HEK293 (cell line): ENCODE measurements at regions of chr6 and their contacts with region 1.

Region 1: GRCh38 chr6:56955171-56956045 is 501 bp downstream of the BEND6 start:
- H3K4me3 ChIP-seq: peak overlapping the region; percentile 62
- H3K27ac ChIP-seq: peak overlapping the region; percentile 70; the same call in 1 of the 2 replicates
- H3K4me1 ChIP-seq: peaks cover 6% of the 10 kb centered on the region
- CTCF ChIP-seq: peak; percentile 94

Region 2: DNA sequence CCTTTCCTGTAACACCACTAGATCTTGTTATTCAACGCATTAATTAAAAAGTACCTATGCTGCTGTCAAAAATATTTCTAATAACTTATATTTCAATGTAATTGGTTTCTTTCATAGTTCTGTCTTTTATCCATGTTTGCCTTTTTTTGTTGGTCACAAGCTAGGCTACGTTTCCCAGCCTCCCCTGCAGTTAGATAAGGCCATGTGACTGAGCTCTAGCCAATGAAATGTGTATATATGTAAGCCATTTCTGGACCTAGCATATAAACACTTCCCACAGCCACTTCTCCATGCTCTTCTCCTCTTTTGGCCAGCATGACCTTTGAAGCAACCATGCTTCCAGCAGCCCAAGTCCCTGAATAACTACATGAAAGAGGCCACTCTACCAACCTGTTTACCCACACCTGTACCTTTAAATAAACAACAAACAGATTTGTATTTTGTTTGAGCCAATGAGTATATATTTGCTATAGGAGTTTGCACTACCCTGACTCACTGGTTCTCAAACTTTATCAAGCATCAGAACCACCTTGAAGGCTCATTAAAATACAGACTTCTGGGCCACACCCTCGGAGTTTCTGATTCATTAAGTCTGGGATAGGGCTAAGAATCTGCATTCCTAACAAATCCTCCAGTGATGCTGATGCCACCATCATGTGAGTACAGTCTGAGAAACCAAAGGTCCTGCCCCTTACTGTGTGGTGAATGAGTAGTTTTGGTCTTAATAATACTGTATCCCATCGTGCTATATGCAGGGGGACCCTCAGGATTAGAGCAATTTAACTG is 46.1 kb before region 1 on chr6:
- CTCF ChIA-PET with region 1: interaction called, 92 read pairs
- POLR2A ChIA-PET with region 1: interaction called, 15 read pairs
- H3K4me3 ChIP-seq: no peak overlapping the region
- H3K27ac ChIP-seq: no peak overlapping the region
- H3K4me1 ChIP-seq: no peaks in the 10 kb centered on the region; the same call in 1 of the 2 replicates
- CTCF ChIP-seq: no peak

Region 3: DNA sequence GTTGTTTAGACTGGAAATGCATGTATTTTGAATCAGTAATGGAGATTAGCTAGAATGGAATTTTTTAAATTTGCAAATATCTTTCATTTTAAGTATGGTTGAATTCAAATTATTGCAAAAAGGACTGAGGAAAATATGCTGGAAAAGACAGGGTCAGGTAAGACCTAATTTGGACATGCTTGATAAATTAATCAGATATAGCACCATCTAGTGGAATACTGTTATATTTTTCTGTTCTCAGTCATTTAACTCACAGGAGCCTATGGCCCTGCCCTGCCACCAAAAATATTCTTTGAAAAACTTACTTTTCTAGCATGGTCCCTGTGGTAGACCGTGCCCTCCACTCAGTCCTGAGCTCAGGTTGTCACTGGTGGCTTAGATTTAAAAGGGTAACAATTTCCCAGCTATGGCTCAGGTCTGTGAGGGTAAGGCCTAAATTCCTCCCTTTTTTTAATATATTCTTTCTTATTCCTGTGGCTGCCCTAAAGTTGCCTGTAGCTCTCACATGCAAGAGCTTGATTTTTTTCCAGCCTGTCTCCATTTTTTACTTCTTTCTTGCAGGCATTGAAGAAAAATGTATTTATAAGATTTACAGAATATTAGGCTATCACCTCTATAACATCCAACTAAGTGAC is 65.8 kb after region 1 on chr6:
- CTCF ChIA-PET with region 1: interaction called, 32 read pairs
- POLR2A ChIA-PET with region 1: interaction called, 3 read pairs
- H3K4me3 ChIP-seq: no peak overlapping the region
- H3K27ac ChIP-seq: no peak overlapping the region
- H3K4me1 ChIP-seq: no peaks in the 10 kb centered on the region
- CTCF ChIP-seq: no peak